ENCODE measurements at regions of chr6 and their contacts with region 1.

Region 1: DNA sequence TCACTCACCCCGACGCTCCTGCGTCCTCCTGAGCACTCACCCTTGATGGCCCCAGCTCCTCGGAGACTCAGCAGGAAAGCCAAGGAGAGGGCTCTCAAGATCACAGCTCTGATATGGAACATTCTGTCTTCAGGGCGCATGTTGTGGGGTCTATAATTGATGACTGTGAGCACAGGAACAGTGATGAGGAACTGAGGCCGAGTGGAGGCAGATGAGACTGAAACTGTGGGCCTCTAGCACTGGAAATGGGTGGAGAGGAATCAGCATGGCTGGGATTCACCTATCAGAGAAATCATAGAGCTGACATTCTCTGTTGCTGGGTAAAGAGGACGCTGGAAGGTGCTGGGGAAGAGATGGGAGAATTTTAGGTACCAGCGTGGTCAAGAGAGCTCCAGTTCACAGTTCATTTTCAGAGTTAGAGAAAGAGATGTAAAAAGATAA is at the start of gene HLA-DPA1:
- DNase-seq: no peak
- H3K4me3 ChIP-seq: peak within 1 kb of the TSS; percentile 12 to 49 (median 24)
- H3K27ac ChIP-seq: peak within 1 kb of the TSS in 1 of 2 donors; percentile 20
- H3K4me1 ChIP-seq: no peaks in the 10 kb centered on the region
- H3K27me3 ChIP-seq: no peaks in the 10 kb centered on the region
- CTCF ChIP-seq: no peak
- POLR2A ChIP-seq: no peak
- total RNA-seq, gene HLA-DPA1: 51.8 to 116 (median 75.4) TPM

Region 2: GRCh38 chr6:32738126-32738525 is 335.3 kb before region 1 on chr6:
- intact Hi-C with region 1: loop called (anchors 5 kb)
- DNase-seq: no peak
- H3K4me3 ChIP-seq: no peak overlapping the region
- H3K27ac ChIP-seq: no peak overlapping the region
- H3K4me1 ChIP-seq: no peaks in the 10 kb centered on the region
- H3K27me3 ChIP-seq: no peaks in the 10 kb centered on the region
- CTCF ChIP-seq: no peak
- POLR2A ChIP-seq: no peak

Region 3: GRCh38 chr6:34205466-34205865 is 1132.0 kb after region 1 on chr6:
- intact Hi-C with region 1: no loop called
- DNase-seq: no peak
- H3K4me3 ChIP-seq: no peak overlapping the region
- H3K27ac ChIP-seq: no peak overlapping the region
- H3K4me1 ChIP-seq: no peaks in the 10 kb centered on the region
- H3K27me3 ChIP-seq: no peaks in the 10 kb centered on the region
- CTCF ChIP-seq: no peak
- POLR2A ChIP-seq: no peak

Measured in breast epithelium (tissue), 4 donors.